ENCODE measurements at regions of chr10 and their contacts with region 1.

Region 1: DNA sequence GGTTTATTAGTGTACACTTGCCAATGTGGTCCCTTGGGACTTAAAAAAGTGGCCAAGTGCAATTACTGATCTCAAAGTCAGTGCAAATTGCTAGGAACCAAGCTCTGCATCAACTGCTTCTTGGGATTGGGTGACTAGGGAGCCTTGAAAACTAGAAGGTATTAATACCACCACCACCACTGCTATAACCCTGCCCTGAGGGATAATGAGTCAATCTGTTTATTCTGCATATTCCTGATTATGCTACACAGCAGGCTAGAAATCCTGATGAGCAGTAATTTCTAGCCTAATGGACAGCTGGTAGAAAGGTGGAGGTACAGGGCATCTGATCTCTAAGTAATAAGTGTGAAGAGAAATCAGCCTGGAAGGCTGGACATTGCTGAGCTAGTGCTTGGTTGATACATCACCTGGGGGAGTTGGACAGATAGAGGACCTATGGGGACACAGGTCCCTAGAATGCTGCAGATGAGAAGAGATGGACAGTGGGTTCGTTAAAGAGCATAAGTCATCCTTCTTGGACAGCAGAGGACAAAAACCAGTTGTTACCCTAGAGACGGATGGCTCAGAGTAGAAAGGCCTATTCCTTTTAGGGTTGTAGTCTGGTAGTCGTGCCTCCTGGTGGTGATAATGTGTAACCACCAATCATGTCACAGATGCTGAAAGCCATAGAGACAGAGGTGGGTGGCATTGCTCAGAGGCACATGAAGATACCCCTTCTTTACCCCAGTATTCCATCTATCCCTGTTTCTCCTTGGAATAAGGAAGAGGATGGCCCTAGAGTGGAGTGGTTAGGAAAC is 554.8 kb downstream of the SORCS1 start:
- DNase-seq: no peak
- H3K4me3 ChIP-seq: no peak overlapping the region
- H3K27ac ChIP-seq: no peak overlapping the region
- H3K4me1 ChIP-seq: no peaks in the 10 kb centered on the region
- H3K27me3 ChIP-seq: peaks cover 3 to 6% (median 4%) of the 10 kb centered on the region in 4 experiments; a peak in 5 of 7 replicates
- CTCF ChIP-seq: peak; percentile 9 to 71 (median 63)
- EP300 ChIP-seq: no peak
- POLR2A ChIP-seq: no peak
- RAD21 ChIP-seq: peak; percentile 61 to 67

Region 2: GRCh38 chr10:106582291-106582690 is 27.4 kb before region 1 on chr10:
- CTCF ChIA-PET with region 1: interaction called, 15 read pairs
- POLR2A ChIA-PET with region 1: no interaction called
- DNase-seq: no peak
- H3K4me3 ChIP-seq: no peak overlapping the region
- H3K27ac ChIP-seq: no peak overlapping the region
- H3K4me1 ChIP-seq: peaks cover 0 to 4% (median 0%) of the 10 kb centered on the region in 4 experiments; a peak in 2 of 7 replicates
- H3K27me3 ChIP-seq: no peaks in the 10 kb centered on the region
- CTCF ChIP-seq: no peak
- EP300 ChIP-seq: no peak
- POLR2A ChIP-seq: no peak
- RAD21 ChIP-seq: no peak

Measured in H1 (cell line).